ENCODE measurements at regions of chr5 and their contacts with region 1.

Region 1: DNA sequence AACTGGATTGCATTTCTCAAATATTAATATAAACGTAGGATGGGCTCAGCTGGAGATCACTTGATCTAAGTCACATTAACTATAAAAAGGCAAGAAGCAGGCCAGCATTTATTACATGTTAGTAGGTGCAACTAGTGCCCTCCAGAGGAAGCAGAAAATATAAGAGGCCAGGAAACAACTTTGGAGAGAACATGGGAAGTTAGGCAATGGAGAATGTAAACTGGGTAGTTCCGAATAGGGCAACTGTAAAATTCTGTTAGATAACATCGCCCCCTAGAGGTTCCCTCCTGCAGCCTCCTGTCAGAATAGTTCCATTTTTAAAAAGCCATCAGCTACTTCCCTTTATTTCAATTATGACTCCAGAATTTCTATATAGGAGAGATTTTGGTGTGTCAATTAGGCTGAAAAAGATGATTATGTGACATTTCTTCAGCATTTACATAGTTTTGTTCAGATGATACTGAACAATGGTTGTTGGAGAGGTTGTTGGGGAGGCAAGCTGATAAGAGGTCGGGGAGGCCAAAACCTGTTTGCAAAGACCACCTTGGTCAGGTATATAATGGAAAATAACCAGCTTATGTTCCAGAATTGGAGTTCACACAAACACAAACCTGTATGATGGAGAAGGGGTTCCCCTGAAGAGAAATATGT is 22.4 kb downstream of the CCL28 start:
- DNase-seq: peak; percentile 96
- ATAC-seq: peak; percentile 84
- H3K4me3 ChIP-seq: no peak overlapping the region
- H3K27ac ChIP-seq: no peak overlapping the region
- H3K4me1 ChIP-seq: peaks cover 14% of the 10 kb centered on the region
- H3K27me3 ChIP-seq: no peaks in the 10 kb centered on the region
- CTCF ChIP-seq: peak; percentile 98

Region 2: DNA sequence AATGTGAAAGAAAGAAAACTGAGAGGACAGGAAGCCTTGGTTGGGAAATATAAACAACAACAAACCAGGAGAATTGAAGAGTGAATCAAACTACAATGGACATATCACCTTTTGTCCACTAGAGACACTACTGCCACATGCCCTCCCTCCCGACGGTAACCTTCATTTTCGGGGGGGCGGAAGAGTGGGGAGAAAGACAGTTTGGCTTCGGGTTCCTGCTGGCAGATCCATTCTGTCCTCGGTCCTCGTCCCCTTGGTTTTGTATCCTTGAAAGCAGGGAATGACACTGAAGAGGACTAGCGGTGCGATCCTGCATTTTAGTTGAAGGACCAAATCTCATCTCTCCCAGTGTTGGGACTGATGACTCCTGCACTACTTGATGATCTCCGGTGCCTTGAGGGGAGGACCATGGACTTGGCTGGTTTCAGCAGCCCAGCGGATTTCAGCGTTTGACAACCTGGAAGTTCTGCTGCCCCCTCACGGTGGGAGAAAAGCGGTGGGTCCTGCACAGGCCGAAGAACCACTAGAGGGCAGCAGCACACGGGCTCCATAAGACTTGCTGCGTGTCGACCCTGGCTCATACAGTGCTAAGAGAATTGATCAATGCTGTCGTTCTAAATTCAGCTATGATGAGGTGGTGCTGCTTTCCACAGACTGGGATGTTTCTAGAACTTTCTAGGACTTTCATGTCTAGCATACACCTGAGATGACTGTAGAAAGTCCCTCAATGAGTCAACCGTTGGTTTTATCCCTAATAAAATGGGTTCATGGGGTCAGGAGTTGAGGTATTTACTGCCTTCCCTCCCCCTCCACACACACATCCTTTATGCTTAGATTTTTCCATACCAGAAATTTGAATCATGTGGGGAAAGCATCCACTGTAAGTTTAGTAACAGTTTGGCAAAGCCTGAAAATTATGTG is 284.2 kb before region 1 on chr5:
- CTCF ChIA-PET with region 1: no interaction called
- POLR2A ChIA-PET with region 1: no interaction called
- intact Hi-C with region 1: loop called (anchors 1 kb)
- DNase-seq: peak; percentile 98
- ATAC-seq: peak; percentile 93
- H3K4me3 ChIP-seq: peak overlapping the region; percentile 67
- H3K27ac ChIP-seq: peak overlapping the region; percentile 31
- H3K4me1 ChIP-seq: peaks cover 12% of the 10 kb centered on the region
- H3K27me3 ChIP-seq: no peaks in the 10 kb centered on the region
- CTCF ChIP-seq: peak; percentile 100

Region 3: GRCh38 chr5:43120720-43121564 is 268.9 kb before region 1 on chr5 and contains the start of gene ZNF131:
- CTCF ChIA-PET with region 1: interaction called, 3 read pairs
- POLR2A ChIA-PET with region 1: no interaction called
- intact Hi-C with region 1: loop called (anchors 5 kb)
- DNase-seq: peak; percentile 99
- ATAC-seq: peak; percentile 94
- H3K4me3 ChIP-seq: peak within 1 kb of the TSS; percentile 79
- H3K27ac ChIP-seq: peak within 1 kb of the TSS; percentile 92
- H3K4me1 ChIP-seq: peaks cover 27% of the 10 kb centered on the region
- H3K27me3 ChIP-seq: no peaks in the 10 kb centered on the region
- CTCF ChIP-seq: no peak
- total RNA-seq, gene ZNF131: 37.3 and 41.5 TPM in 2 replicates

Region 4: GRCh38 chr5:43227655-43228054 is 162.1 kb before region 1 on chr5:
- CTCF ChIA-PET with region 1: interaction called, 7 read pairs
- POLR2A ChIA-PET with region 1: no interaction called
- intact Hi-C with region 1: loop called (anchors 1 kb)
- DNase-seq: peak; percentile 84
- ATAC-seq: peak; percentile 60
- H3K4me3 ChIP-seq: no peak overlapping the region
- H3K27ac ChIP-seq: no peak overlapping the region
- H3K4me1 ChIP-seq: peaks cover 3% of the 10 kb centered on the region; the same call in 1 of the 2 replicates
- H3K27me3 ChIP-seq: no peaks in the 10 kb centered on the region
- CTCF ChIP-seq: peak; percentile 80

Region 5: DNA sequence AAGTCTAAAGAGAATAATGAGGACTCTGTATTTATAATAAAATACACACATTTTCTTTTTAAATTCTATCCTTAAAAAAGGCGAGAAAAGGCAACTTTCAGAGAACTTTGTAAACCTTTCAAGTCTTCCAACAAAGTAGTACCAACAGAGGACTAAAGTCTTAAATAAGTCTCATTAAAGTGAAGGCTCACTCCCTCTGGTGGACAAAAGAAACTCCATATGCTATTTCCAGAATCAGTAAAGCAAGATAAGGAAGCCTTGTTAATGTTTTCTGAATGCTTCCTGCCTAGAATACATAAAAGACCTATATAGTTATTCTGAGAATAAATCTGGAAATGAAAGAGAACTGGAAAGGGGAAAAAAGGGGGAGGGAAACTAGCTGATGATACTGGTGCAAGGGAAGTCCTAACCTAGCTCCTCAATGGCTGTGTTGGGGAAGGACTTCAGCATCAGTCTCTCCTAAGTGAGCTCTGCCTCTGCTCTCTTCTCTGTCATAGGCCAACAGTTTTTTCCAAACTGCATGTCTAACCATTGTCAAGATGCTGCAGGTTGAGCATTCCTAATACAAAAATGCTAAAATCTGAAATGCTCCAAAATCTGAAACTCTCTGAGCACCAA is 83.7 kb before region 1 on chr5:
- CTCF ChIA-PET with region 1: interaction called, 4 read pairs
- POLR2A ChIA-PET with region 1: no interaction called
- intact Hi-C with region 1: loop called (anchors 1 kb)
- DNase-seq: peak; percentile 88
- ATAC-seq: peak; percentile 84
- H3K4me3 ChIP-seq: no peak overlapping the region
- H3K27ac ChIP-seq: no peak overlapping the region
- H3K4me1 ChIP-seq: peaks cover 18% of the 10 kb centered on the region
- H3K27me3 ChIP-seq: no peaks in the 10 kb centered on the region
- CTCF ChIP-seq: peak; percentile 93

Region 6: GRCh38 chr5:43313035-43313853 is 76.6 kb before region 1 on chr5 and contains the start of gene HMGCS1:
- CTCF ChIA-PET with region 1: interaction called, 4 read pairs
- POLR2A ChIA-PET with region 1: interaction called, 4 read pairs
- intact Hi-C with region 1: loop called (anchors 1 kb)
- DNase-seq: peak; percentile 99
- ATAC-seq: peak; percentile 90
- H3K4me3 ChIP-seq: peak within 1 kb of the TSS; percentile 93
- H3K27ac ChIP-seq: peak within 1 kb of the TSS; percentile 89
- H3K4me1 ChIP-seq: peaks cover 64% of the 10 kb centered on the region
- H3K27me3 ChIP-seq: no peaks in the 10 kb centered on the region
- CTCF ChIP-seq: 0 out of 2 replicates have a peak, but pooled peaks have one; percentile 28
- total RNA-seq, gene HMGCS1: 31.4 and 39.7 TPM in 2 replicates

Region 7: DNA sequence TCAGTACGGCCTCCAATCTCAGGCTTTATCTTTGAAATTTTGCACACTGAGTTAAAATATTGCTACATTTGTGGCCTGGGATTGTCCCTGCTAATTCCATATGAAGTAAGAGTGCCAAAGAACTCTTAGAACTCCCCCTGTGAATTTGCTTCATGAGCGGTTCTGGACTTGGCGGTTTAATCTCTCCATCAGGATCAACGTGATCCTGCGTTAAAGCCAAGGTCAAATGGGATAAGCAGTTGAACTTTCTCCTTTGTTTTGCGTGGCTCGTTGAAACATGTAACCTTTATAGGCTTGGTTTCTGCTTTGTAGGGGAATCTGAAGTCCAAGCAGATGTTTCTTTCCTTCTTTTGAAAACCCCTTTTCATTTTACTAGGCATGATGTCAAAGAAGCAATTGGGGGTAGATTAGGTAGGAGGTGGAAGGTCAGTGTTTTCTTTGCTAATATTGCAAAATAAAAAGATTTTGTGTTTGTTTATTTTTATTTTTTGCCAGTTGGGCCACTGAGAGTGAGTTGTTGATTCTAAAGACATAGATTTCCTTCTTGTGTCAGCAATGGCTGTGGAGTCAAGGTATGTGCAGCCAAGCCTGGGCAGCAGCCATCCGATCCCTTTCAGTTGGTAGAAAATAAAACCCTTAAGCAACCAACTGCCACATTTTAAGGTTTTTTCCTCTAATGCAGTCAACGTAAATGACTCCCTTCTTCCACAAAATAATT is 604.0 kb after region 1 on chr5:
- CTCF ChIA-PET with region 1: no interaction called
- POLR2A ChIA-PET with region 1: no interaction called
- intact Hi-C with region 1: no loop called
- DNase-seq: no peak
- ATAC-seq: no peak
- H3K4me3 ChIP-seq: no peak overlapping the region
- H3K27ac ChIP-seq: no peak overlapping the region
- H3K4me1 ChIP-seq: peaks cover 16% of the 10 kb centered on the region
- H3K27me3 ChIP-seq: no peaks in the 10 kb centered on the region
- CTCF ChIP-seq: no peak

Measured in PC-3 (cell line).